ENCODE measurements at regions of chrX and their contacts with region 1.

Region 1: DNA sequence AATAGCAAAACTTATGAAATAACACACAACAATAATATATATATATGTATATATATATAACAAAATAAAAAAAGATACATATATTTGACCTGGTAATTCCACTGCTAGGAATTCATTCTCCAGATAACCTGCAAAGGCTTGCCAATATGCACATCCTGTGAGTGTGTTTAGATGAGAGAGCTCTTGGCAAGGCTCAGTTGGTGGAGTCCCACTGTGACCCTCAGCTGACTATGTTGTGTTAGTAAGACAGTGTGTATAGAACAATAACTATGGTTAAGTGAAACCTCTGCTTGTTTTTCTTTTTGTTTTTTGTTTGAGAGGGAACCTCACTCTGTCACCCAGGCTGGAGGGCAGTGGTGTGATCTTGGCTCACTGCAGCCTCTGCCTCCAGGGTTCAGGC is 39.5 kb upstream of the RBMX start:
- DNase-seq: no peak
- ATAC-seq: no peak
- H3K4me3 ChIP-seq: no peak overlapping the region
- H3K4me3 Mint-ChIP-seq: no peak overlapping the region
- H3K27ac ChIP-seq: no peak overlapping the region
- H3K27ac Mint-ChIP-seq: no peak overlapping the region
- H3K4me1 ChIP-seq: no peaks in the 10 kb centered on the region
- H3K4me1 Mint-ChIP-seq: peaks cover 1 to 2% of the 10 kb centered on the region in 2 donors
- H3K27me3 ChIP-seq: no peaks in the 10 kb centered on the region
- H3K27me3 Mint-ChIP-seq: no peaks in the 10 kb centered on the region
- CTCF ChIP-seq: no peak

Region 2: DNA sequence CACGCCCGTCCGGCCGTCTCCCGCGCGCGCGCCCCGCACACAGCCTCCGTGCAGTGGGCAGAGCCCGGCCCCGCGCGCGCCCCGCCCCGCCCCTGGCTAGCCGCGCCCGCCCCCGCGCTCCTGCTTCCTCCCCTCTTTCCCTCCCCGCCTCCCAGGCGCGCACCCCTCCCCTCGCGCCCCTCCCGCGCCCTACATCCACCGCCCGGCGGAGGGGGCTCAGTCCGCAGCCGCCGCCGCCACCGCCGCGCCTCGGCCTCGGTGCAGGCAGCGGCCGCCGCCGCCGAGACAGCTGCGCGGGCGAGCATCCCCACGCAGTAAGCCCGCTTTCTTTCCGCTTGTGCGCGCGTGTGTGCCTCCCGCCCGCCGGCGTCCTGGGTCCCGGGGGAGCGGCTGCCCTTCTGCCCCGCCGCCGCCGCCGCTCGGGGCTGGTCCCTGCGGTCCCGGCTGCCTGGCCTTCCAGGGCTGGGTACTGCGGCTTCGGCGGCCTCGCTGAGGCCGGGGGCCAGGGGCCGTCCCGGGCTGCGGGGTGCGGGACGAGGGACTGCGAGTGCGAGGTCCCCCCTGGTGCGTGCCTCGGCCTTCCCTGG is 772.6 kb before region 1 on chrX and contains the start of gene FHL1:
- intact Hi-C with region 1: no loop called
- DNase-seq: peak; percentile 18 to 65
- ATAC-seq: peak; percentile 77 to 86 (median 77)
- H3K4me3 ChIP-seq: peak within 1 kb of the TSS; percentile 58
- H3K4me3 Mint-ChIP-seq: peak within 1 kb of the TSS; percentile 80
- H3K27ac ChIP-seq: no peak within 1 kb of the TSS
- H3K27ac Mint-ChIP-seq: no peak within 1 kb of the TSS
- H3K4me1 ChIP-seq: peaks cover 12% of the 10 kb centered on the region
- H3K4me1 Mint-ChIP-seq: peaks cover 14 to 18% of the 10 kb centered on the region in 2 donors
- H3K27me3 ChIP-seq: no peaks in the 10 kb centered on the region
- H3K27me3 Mint-ChIP-seq: peaks cover 8 to 16% of the 10 kb centered on the region in 2 donors
- CTCF ChIP-seq: no peak
- total RNA-seq, gene FHL1: 3.2 to 5.7 (median 3.7) TPM

Region 3: GRCh38 chrX:136608295-136609171 is 311.5 kb before region 1 on chrX:
- intact Hi-C with region 1: loop called (anchors 2 kb)
- DNase-seq: peak; percentile 19 to 82
- ATAC-seq: peak in 2 of 3 donors; percentile 69 to 77
- H3K4me3 ChIP-seq: no peak overlapping the region
- H3K4me3 Mint-ChIP-seq: peak overlapping the region; percentile 25
- H3K27ac ChIP-seq: no peak overlapping the region
- H3K27ac Mint-ChIP-seq: no peak overlapping the region
- H3K4me1 ChIP-seq: peaks cover 12% of the 10 kb centered on the region
- H3K4me1 Mint-ChIP-seq: peaks cover 12 to 16% of the 10 kb centered on the region in 2 donors
- H3K27me3 ChIP-seq: no peaks in the 10 kb centered on the region
- H3K27me3 Mint-ChIP-seq: peaks cover 0 to 24% of the 10 kb centered on the region in 2 donors
- CTCF ChIP-seq: peak; percentile 47

Region 4: DNA sequence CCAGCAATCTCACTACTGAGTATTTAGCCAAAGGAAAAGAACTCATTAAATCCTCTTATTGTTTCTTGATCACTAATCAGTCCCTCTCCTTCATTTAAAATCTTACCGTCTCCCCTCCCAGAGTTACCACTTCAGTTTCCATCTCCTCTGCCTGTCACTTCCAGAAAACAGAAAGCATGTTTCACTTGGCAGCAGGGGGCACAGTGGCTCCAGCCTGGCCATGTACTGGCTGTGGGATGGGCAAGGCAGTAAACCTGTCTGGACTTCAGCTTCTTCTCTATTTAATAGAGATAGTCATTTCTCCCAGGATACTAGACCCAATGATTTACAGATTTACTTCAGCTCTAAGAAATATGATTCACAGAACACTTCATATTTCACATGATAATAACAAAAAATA is 208.9 kb before region 1 on chrX:
- intact Hi-C with region 1: loop called (anchors 1 kb)
- DNase-seq: peak in 1 of 2 donors; percentile 36
- ATAC-seq: no peak
- H3K4me3 ChIP-seq: no peak overlapping the region
- H3K4me3 Mint-ChIP-seq: no peak overlapping the region
- H3K27ac ChIP-seq: no peak overlapping the region
- H3K27ac Mint-ChIP-seq: peak overlapping the region; percentile 55 to 80
- H3K4me1 ChIP-seq: no peaks in the 10 kb centered on the region
- H3K4me1 Mint-ChIP-seq: peaks cover 7 to 12% of the 10 kb centered on the region in 2 donors
- H3K27me3 ChIP-seq: no peaks in the 10 kb centered on the region
- H3K27me3 Mint-ChIP-seq: no peaks in the 10 kb centered on the region
- CTCF ChIP-seq: no peak

Region 5: GRCh38 chrX:136909706-136910564 is 10.1 kb before region 1 on chrX:
- intact Hi-C with region 1: loop called (anchors 1 kb)
- DNase-seq: peak; percentile 31 to 80
- ATAC-seq: peak; percentile 63 to 70 (median 64)
- H3K4me3 ChIP-seq: peak overlapping the region; percentile 89
- H3K4me3 Mint-ChIP-seq: peak overlapping the region; percentile 91
- H3K27ac ChIP-seq: peak overlapping the region; percentile 88
- H3K27ac Mint-ChIP-seq: peak overlapping the region; percentile 81 to 95
- H3K4me1 ChIP-seq: peaks cover 23% of the 10 kb centered on the region
- H3K4me1 Mint-ChIP-seq: peaks cover 24 to 27% of the 10 kb centered on the region in 2 donors
- H3K27me3 ChIP-seq: no peaks in the 10 kb centered on the region
- H3K27me3 Mint-ChIP-seq: no peaks in the 10 kb centered on the region
- CTCF ChIP-seq: no peak

Region 6: GRCh38 chrX:137305404-137305803 is 385.4 kb after region 1 on chrX:
- intact Hi-C with region 1: no loop called
- DNase-seq: no peak
- ATAC-seq: no peak
- H3K4me3 ChIP-seq: no peak overlapping the region
- H3K4me3 Mint-ChIP-seq: no peak overlapping the region
- H3K27ac ChIP-seq: no peak overlapping the region
- H3K27ac Mint-ChIP-seq: no peak overlapping the region
- H3K4me1 ChIP-seq: no peaks in the 10 kb centered on the region
- H3K4me1 Mint-ChIP-seq: no peaks in the 10 kb centered on the region
- H3K27me3 ChIP-seq: no peaks in the 10 kb centered on the region
- H3K27me3 Mint-ChIP-seq: peaks cover 0 to 9% of the 10 kb centered on the region in 2 donors
- CTCF ChIP-seq: no peak

Region 7: GRCh38 chrX:137387646-137388045 is 467.6 kb after region 1 on chrX:
- intact Hi-C with region 1: no loop called
- DNase-seq: no peak
- ATAC-seq: no peak
- H3K4me3 ChIP-seq: no peak overlapping the region
- H3K4me3 Mint-ChIP-seq: no peak overlapping the region
- H3K27ac ChIP-seq: no peak overlapping the region
- H3K27ac Mint-ChIP-seq: no peak overlapping the region
- H3K4me1 ChIP-seq: no peaks in the 10 kb centered on the region
- H3K4me1 Mint-ChIP-seq: no peaks in the 10 kb centered on the region
- H3K27me3 ChIP-seq: no peaks in the 10 kb centered on the region
- H3K27me3 Mint-ChIP-seq: no peaks in the 10 kb centered on the region
- CTCF ChIP-seq: no peak

Measured in natural killer cell (primary cell).